H1 (cell line): ENCODE measurements at regions of chr22 and their contacts with region 1.

Region 1: GRCh38 chr22:38755911-38756532 is at the start of gene SUN2:
- DNase-seq: peak in 1 of 2 experiments; percentile 88
- H3K4me3 ChIP-seq: peak within 1 kb of the TSS; percentile 57 to 81 (median 60)
- H3K27ac ChIP-seq: no peak within 1 kb of the TSS; the same call in 1 of the 2 replicates
- H3K4me1 ChIP-seq: peaks cover 4 to 16% (median 8%) of the 10 kb centered on the region in 4 experiments
- H3K27me3 ChIP-seq: peaks cover 0 to 7% (median 5%) of the 10 kb centered on the region in 4 experiments; a peak in 5 of 7 replicates
- CTCF ChIP-seq: no peak
- EP300 ChIP-seq: no peak
- POLR2A ChIP-seq: no peak
- RAD21 ChIP-seq: no peak
- total RNA-seq, gene SUN2: 10.5 and 11.7 TPM in 2 replicates

Region 2: GRCh38 chr22:38733329-38733723 is 22.7 kb before region 1 on chr22:
- CTCF ChIA-PET with region 1: interaction called, 124 read pairs
- POLR2A ChIA-PET with region 1: interaction called, 112 read pairs
- DNase-seq: peak in 1 of 2 experiments; percentile 80
- H3K4me3 ChIP-seq: no peak overlapping the region
- H3K27ac ChIP-seq: no peak overlapping the region
- H3K4me1 ChIP-seq: no peaks in the 10 kb centered on the region
- H3K27me3 ChIP-seq: no peaks in the 10 kb centered on the region
- CTCF ChIP-seq: peak; percentile 57 to 89 (median 70)
- EP300 ChIP-seq: no peak
- POLR2A ChIP-seq: no peak
- RAD21 ChIP-seq: peak; percentile 43 to 63

Region 3: DNA sequence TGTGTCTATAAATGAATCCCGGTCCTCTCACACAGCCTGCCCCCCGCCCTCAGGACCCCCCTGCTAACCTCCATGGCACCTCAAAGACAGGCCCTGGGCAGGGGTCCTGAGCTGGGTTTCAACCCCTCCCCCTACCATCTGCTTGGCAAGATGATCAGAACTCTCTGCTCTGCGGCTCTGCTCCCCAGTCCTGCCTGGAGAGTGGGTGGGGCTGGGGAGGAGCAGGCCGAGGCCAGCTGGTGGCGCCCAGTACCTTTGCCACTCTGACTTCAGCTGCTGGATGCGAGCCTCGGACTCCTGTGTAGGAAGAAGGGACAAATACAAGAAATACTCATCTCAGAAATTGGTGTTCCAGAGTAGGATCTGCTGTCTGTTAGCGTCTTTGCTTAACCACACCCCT is 15.3 kb before region 1 on chr22:
- CTCF ChIA-PET with region 1: interaction called, 124 read pairs
- POLR2A ChIA-PET with region 1: interaction called, 112 read pairs
- DNase-seq: no peak
- H3K4me3 ChIP-seq: no peak overlapping the region
- H3K27ac ChIP-seq: no peak overlapping the region
- H3K4me1 ChIP-seq: no peaks in the 10 kb centered on the region
- H3K27me3 ChIP-seq: no peaks in the 10 kb centered on the region
- CTCF ChIP-seq: peak; percentile 5 to 33 (median 21); a peak in 3 of 4 replicates
- EP300 ChIP-seq: no peak
- POLR2A ChIP-seq: no peak
- RAD21 ChIP-seq: peak; percentile 30 to 45